ENCODE measurements at regions of chr1 and their contacts with region 1.

Region 1: DNA sequence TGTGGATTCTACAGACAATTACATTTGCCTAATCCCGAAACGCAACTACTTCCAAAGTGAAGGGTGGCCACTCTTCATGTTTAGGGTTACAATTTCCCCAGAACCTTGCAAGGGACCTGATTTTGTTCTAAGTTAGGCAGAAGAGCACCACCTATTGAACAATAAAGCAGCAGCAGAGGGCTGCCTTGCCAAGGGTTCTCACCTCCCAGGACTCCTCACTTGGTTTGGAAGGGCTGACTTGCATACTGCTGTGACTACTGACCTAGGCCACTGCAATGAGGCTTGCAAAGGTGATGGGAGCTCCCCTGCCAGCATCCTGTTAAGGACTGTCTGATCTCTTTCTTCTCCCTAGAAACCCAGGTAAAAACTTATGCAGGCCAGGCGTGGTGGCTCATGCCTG is 14.2 kb downstream of the MTOR start:
- DNase-seq: no peak
- CTCF ChIP-seq: peak; percentile 16

Region 2: GRCh38 chr1:11207898-11208611 is 40.1 kb before region 1 on chr1:
- CTCF ChIA-PET with region 1: interaction called, 11 read pairs
- POLR2A ChIA-PET with region 1: no interaction called
- DNase-seq: no peak
- CTCF ChIP-seq: no peak

Region 3: GRCh38 chr1:11227106-11228077 is 20.8 kb before region 1 on chr1:
- CTCF ChIA-PET with region 1: interaction called, 65 read pairs
- POLR2A ChIA-PET with region 1: no interaction called
- DNase-seq: peak; percentile 39
- CTCF ChIP-seq: no peak

Region 4: DNA sequence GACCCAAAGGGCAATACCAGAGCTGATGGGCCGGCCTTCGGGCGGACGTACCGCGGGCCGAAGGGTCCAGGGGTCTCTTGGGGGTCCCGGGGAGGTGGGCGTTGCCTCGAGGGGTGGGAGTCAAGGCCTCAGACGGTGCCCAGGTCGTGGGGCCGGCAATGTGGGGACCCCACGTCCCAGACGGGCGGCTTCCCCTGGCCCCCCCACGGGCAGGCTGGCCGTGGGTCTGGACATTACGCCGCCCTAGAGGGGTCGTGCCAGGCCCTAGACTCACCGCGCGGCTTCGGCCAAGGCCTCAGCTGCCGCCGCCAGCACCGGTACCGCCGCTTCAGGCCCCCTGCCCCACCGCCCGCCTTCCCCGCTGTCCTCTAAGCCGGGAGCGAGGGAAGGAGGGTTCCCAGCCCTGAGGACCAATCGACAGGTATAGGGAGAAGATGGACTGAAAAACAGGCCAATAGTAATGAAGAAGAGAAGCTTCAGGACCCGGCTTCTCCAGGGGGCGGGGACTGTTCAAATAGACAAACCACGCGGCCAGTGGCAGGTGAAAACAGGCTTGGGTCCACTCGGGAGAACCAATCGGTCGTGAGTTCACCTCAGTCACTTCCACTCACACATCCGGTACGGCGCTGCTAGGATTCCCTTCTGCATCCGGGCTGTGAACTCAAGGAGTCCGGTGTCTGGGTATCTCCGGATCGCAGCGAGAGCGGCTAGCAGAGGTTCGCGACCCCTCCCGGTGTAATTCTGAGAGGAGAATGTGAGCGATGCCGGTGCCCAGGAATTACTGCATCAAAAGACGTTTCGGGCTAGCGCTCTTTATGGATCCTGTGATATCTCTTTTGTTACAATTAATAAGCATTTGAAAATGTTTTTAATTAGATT is 14.3 kb after region 1 on chr1 and contains the start of gene MTOR:
- CTCF ChIA-PET with region 1: interaction called, 20 read pairs
- POLR2A ChIA-PET with region 1: interaction called, 4 read pairs
- DNase-seq: peak; percentile 98
- CTCF ChIP-seq: no peak